Activated T-helper 2 cell treated with anti-CD3 and anti-CD28 coated beads, Interferon-gamma antibody, Interleukin-2, Interleukin-4, amounts not matched to agents 10 μg/mL and 5 μg/mL and 100 μg/mL, durations not matched to agents 14 hours and 24 hours and 36 hours (primary cell): ENCODE measurements at regions of chr16 and their contacts with region 1.

Region 1: GRCh38 chr16:22190776-22191531 is 15.1 kb upstream of the EEF2K start:
- DNase-seq: peak; percentile 94
- H3K4me3 Mint-ChIP-seq: peak overlapping the region; percentile 84
- H3K27ac Mint-ChIP-seq: peak overlapping the region; percentile 99
- H3K4me1 Mint-ChIP-seq: peaks cover 52% of the 10 kb centered on the region
- H3K27me3 Mint-ChIP-seq: no peaks in the 10 kb centered on the region

Region 2: GRCh38 chr16:21952793-21953540 is 238.0 kb before region 1 on chr16 and contains the start of gene UQCRC2:
- intact Hi-C with region 1: loop called (anchors 2 kb)
- DNase-seq: peak; percentile 85
- H3K4me3 Mint-ChIP-seq: peak within 1 kb of the TSS; percentile 96
- H3K27ac Mint-ChIP-seq: peak within 1 kb of the TSS; percentile 97
- H3K4me1 Mint-ChIP-seq: peaks cover 38% of the 10 kb centered on the region
- H3K27me3 Mint-ChIP-seq: no peaks in the 10 kb centered on the region
- total RNA-seq, gene UQCRC2: 269 and 272 TPM in 2 replicates

Region 3: DNA sequence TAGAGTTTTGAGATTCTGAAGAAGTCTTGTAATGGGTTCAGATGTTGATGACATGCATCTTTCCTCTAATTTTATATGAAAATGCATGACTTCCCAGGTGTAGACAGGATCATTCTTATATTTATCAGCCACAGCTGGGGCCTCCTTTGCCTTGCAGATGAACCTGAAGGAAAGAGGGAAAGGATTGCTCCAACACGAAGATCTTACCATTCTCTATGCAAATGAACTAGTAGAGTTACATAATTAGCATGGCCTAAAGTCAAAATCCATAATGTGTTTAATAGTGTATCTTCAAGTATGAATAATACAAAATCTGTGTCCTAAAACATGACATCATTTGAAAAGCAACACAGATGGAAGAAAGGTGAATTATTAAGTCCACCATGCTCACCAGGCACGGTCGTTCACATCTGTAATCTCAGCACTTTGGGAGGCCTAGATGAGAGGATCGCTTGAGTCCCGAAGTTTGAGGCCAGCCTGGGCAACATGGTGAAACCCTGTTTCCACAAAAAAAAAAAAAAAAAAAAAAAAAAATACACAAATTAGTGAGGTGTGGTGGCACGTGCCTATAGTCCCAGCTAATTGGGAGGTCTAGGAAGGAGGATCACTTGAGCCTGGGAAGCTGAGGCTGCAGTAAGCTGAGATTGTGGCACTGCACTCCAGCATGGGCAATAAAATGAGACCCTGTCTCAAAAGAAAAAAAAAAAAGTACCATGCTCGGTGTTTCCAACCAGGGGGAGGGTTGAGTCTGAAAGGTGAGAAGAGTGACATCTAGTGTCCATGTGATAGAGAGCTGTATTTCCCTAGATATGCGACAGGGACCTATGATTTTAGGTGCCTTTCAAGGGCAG is 92.3 kb before region 1 on chr16:
- intact Hi-C with region 1: loop called (anchors 10 kb)
- DNase-seq: no peak
- H3K4me3 Mint-ChIP-seq: no peak overlapping the region
- H3K27ac Mint-ChIP-seq: no peak overlapping the region
- H3K4me1 Mint-ChIP-seq: peaks cover 1% of the 10 kb centered on the region
- H3K27me3 Mint-ChIP-seq: peaks cover 25% of the 10 kb centered on the region

Region 4: GRCh38 chr16:22206013-22206841 is 15.3 kb after region 1 on chr16 and contains the start of gene EEF2K:
- intact Hi-C with region 1: loop called (anchors 1 kb)
- DNase-seq: peak; percentile 76
- H3K4me3 Mint-ChIP-seq: peak within 1 kb of the TSS; percentile 96
- H3K27ac Mint-ChIP-seq: peak within 1 kb of the TSS; percentile 91
- H3K4me1 Mint-ChIP-seq: peaks cover 41% of the 10 kb centered on the region
- H3K27me3 Mint-ChIP-seq: no peaks in the 10 kb centered on the region
- total RNA-seq, gene EEF2K: 40.4 and 41.0 TPM in 2 replicates

Region 5: GRCh38 chr16:22240023-22240710 is 49.2 kb after region 1 on chr16:
- intact Hi-C with region 1: loop called (anchors 2 kb)
- DNase-seq: no peak
- H3K4me3 Mint-ChIP-seq: no peak overlapping the region
- H3K27ac Mint-ChIP-seq: peak overlapping the region; percentile 90
- H3K4me1 Mint-ChIP-seq: peaks cover 23% of the 10 kb centered on the region
- H3K27me3 Mint-ChIP-seq: no peaks in the 10 kb centered on the region

Region 6: DNA sequence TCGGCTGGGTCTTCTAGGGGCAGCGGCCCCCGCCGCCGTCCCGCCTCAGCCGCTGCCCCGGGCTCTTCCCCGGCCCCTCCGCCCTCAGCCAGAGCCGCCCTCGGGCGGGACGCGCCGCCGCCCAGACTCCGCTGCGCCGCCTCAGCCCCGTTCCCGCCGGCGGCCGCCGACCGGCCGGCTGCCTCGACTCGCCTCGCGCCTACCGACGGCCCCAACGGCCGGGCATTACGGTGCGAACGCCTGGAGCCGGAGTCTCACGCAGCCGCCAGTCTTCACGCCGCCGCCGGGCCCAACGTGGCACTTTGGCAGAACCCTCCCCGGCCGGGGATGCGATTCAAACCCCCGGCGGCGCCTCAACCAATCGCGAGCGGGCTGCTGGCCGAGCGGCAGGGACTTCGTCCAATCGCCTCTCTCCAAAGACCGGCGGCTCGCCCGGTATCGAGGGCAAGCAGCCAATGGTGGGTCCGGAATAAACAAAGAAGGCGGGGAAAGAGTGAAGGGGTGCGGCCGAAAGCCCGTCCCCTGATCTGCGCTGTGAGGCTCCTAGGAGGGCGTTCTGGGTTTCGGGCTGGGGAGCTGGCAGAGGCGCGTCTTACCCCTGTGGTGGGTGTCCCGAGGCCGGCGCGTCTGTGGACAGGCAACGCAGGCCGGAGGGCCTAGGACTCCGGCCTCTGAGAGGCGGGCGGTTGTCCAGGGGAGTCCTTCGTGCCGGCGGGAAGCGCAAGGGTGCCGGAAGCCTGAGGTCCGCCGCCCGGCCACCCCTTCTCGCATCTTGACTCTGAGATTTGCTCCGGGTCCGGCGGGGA is 183.6 kb after region 1 on chr16 and contains the start of gene CDR2:
- intact Hi-C with region 1: loop called (anchors 1 kb)
- DNase-seq: peak; percentile 98
- H3K4me3 Mint-ChIP-seq: peak within 1 kb of the TSS; percentile 95
- H3K27ac Mint-ChIP-seq: peak within 1 kb of the TSS; percentile 93
- H3K4me1 Mint-ChIP-seq: peaks cover 36% of the 10 kb centered on the region
- H3K27me3 Mint-ChIP-seq: peaks cover 5% of the 10 kb centered on the region
- total RNA-seq, gene CDR2: 42.9 and 46.8 TPM in 2 replicates